Activated CD4-positive, alpha-beta memory T cell treated with anti-CD3 and anti-CD28 coated beads for 36 hours (primary cell): ENCODE measurements at regions of chrX and their contacts with region 1.

Region 1: DNA sequence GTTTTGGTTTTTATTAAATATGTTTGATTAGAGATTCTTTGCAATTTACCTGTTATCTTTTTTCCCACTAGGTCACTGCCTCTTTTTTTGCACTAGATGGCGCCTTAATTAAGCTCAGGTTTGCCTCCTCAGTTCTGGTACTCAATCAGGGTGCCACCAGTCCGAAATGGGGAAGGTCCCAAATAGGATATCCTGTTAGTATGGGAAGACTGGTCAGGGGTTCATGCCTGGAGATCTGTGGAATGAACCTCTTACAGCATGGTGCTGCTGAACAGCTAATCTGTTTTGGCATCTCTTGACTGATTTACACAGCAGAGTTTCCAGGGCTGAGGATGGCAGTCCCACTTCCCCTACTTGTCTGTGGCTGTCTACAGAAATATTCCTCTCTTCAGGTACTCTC is 24.2 kb upstream of the VSIG1 start:
- DNase-seq: no peak
- H3K4me3 Mint-ChIP-seq: peak overlapping the region; percentile 48
- H3K27ac Mint-ChIP-seq: peak overlapping the region; percentile 77
- H3K4me1 Mint-ChIP-seq: peaks cover 66% of the 10 kb centered on the region
- H3K27me3 Mint-ChIP-seq: no peaks in the 10 kb centered on the region

Region 2: GRCh38 chrX:107716816-107717700 is 303.6 kb before region 1 on chrX:
- CTCF ChIA-PET with region 1: no interaction called
- POLR2A ChIA-PET with region 1: no interaction called
- intact Hi-C with region 1: loop called (anchors 5 kb)
- DNase-seq: peak; percentile 91
- H3K4me3 Mint-ChIP-seq: peak overlapping the region; percentile 89
- H3K27ac Mint-ChIP-seq: peak overlapping the region; percentile 90
- H3K4me1 Mint-ChIP-seq: peaks cover 44% of the 10 kb centered on the region
- H3K27me3 Mint-ChIP-seq: no peaks in the 10 kb centered on the region

Region 3: GRCh38 chrX:107826238-107827029 is 194.2 kb before region 1 on chrX:
- CTCF ChIA-PET with region 1: no interaction called
- POLR2A ChIA-PET with region 1: no interaction called
- intact Hi-C with region 1: loop called (anchors 5 kb)
- DNase-seq: peak; percentile 38
- H3K4me3 Mint-ChIP-seq: peak overlapping the region; percentile 74
- H3K27ac Mint-ChIP-seq: peak overlapping the region; percentile 71
- H3K4me1 Mint-ChIP-seq: peaks cover 43% of the 10 kb centered on the region
- H3K27me3 Mint-ChIP-seq: no peaks in the 10 kb centered on the region

Region 4: GRCh38 chrX:107894038-107894437 is 126.6 kb before region 1 on chrX:
- CTCF ChIA-PET with region 1: no interaction called
- POLR2A ChIA-PET with region 1: no interaction called
- intact Hi-C with region 1: no loop called
- DNase-seq: no peak
- H3K4me3 Mint-ChIP-seq: no peak overlapping the region
- H3K27ac Mint-ChIP-seq: no peak overlapping the region
- H3K4me1 Mint-ChIP-seq: no peaks in the 10 kb centered on the region
- H3K27me3 Mint-ChIP-seq: no peaks in the 10 kb centered on the region

Region 5: GRCh38 chrX:108001174-108001814 is 19.3 kb before region 1 on chrX:
- CTCF ChIA-PET with region 1: interaction called, 11 read pairs
- POLR2A ChIA-PET with region 1: no interaction called
- intact Hi-C with region 1: no loop called
- DNase-seq: peak; percentile 27
- H3K4me3 Mint-ChIP-seq: no peak overlapping the region
- H3K27ac Mint-ChIP-seq: no peak overlapping the region
- H3K4me1 Mint-ChIP-seq: no peaks in the 10 kb centered on the region
- H3K27me3 Mint-ChIP-seq: no peaks in the 10 kb centered on the region

Region 6: DNA sequence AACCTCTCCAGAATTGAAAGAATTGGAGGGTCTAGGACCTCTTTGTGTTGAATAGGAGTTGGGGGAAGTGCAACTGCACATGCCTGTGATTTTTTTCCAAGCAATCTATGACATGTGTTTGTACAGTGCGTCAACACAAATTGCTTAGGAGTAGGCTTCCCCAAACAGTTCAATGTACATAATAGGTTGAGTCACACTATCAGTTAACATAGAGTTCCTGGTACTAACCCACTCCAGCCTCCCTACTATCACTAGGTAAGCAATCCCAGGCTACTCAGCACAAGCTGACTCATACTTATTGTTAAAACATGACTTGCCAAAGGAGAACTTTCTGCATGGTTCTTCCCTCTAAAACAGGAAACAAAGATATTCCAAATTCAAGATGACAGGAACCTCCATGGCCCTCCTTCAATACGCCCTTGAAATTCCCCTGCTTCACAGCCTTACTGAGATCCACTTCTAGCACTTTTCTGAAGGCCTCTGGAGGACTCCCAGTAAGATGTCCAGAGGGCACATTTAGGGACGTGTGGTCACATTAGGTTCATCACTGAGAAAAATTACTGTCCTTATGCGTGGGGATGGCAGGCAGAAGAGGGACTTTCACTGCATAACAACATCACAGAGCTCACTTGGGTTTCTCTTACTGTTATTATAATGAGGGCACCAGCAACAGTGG is 15.8 kb after region 1 on chrX:
- CTCF ChIA-PET with region 1: interaction called, 9 read pairs
- POLR2A ChIA-PET with region 1: no interaction called
- intact Hi-C with region 1: loop called (anchors 1 kb)
- DNase-seq: no peak
- H3K4me3 Mint-ChIP-seq: no peak overlapping the region
- H3K27ac Mint-ChIP-seq: no peak overlapping the region
- H3K4me1 Mint-ChIP-seq: peaks cover 40% of the 10 kb centered on the region
- H3K27me3 Mint-ChIP-seq: no peaks in the 10 kb centered on the region

Region 7: DNA sequence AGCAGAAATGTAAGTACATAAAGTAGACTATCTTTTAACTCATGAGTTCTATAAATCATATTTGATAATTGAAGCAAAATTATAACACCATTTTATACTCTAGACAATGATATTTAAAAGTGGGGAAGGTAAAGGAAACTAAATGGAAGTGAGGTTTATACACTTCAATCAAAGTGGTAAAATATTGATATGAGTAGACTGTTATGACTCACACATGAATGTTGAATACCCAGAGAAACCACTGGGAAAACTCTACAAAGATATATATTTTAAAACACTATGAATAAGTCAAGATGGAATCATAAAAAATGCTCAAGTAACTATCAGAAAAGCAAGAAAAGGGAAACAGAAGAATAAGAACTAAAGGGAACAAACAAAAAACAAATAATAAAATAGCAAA is 32.6 kb after region 1 on chrX:
- CTCF ChIA-PET with region 1: no interaction called
- POLR2A ChIA-PET with region 1: no interaction called
- intact Hi-C with region 1: loop called (anchors 2 kb)
- DNase-seq: no peak
- H3K4me3 Mint-ChIP-seq: no peak overlapping the region
- H3K27ac Mint-ChIP-seq: no peak overlapping the region
- H3K4me1 Mint-ChIP-seq: peaks cover 7% of the 10 kb centered on the region
- H3K27me3 Mint-ChIP-seq: no peaks in the 10 kb centered on the region

Region 8: DNA sequence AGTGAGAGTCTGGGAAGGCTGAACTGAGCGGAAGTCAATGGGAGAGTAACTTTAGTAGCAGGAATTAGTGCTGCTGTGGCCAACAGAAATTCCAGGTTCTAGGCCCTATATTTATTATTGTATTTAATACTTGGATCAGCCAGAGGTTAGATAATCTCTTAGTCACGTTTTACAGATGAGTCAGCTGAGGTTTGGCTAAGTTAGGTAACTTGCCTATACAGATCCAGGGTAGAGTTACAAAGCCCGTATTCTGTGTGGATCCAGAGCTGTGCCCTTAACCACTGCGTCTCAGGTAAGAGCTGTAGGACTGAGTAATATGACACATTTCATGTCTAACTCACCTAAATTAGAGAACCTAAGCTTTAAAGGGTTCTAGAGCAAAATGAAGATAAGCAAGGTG is 50.3 kb after region 1 on chrX:
- CTCF ChIA-PET with region 1: interaction called, 45 read pairs
- POLR2A ChIA-PET with region 1: no interaction called
- intact Hi-C with region 1: loop called (anchors 1 kb)
- DNase-seq: no peak
- H3K4me3 Mint-ChIP-seq: no peak overlapping the region
- H3K27ac Mint-ChIP-seq: no peak overlapping the region
- H3K4me1 Mint-ChIP-seq: peaks cover 3% of the 10 kb centered on the region
- H3K27me3 Mint-ChIP-seq: no peaks in the 10 kb centered on the region